ENCODE measurements at regions of chr7 and their contacts with region 1.

Region 1: GRCh38 chr7:137626469-137627067 is 220.2 kb downstream of the DGKI start:
- DNase-seq: peak in 1 of 2 experiments; percentile 85
- H3K4me3 ChIP-seq: no peak overlapping the region
- H3K27ac ChIP-seq: no peak overlapping the region
- H3K4me1 ChIP-seq: no peaks in the 10 kb centered on the region
- H3K27me3 ChIP-seq: no peaks in the 10 kb centered on the region
- CTCF ChIP-seq: peak; percentile 71 to 92 (median 89)
- EP300 ChIP-seq: no peak
- POLR2A ChIP-seq: no peak
- RAD21 ChIP-seq: peak; percentile 80 to 88

Region 2: DNA sequence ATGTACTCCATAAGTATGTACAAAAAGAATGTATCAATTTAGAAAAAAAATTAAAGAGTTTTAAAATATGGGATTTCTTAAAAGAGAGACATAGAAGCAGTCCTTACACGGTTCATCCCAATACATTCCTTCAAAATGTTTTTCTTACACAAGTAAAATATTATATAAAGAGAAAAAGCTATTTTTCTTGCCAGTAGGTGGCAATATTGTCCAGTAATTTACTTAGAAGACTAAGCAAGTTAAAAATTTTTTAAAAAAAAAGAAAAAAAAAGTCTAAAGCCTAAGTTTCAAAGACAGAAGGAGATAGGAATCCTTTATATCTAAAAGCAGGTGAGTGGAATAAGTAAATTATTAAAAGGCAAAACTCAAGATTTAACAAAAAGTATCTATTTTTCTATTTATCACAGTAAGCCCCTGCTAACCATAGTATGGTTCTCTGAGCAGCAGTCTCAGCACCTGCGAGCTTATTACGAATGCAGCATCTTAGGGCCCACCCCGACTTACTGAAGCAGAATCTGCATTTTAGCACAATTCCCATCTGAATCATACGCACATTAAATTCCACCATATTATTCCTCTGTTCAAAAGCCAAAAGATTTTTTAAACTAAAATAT is 20.4 kb before region 1 on chr7:
- CTCF ChIA-PET with region 1: interaction called, 91 read pairs
- POLR2A ChIA-PET with region 1: interaction called, 3 read pairs
- DNase-seq: no peak
- H3K4me3 ChIP-seq: no peak overlapping the region
- H3K27ac ChIP-seq: no peak overlapping the region
- H3K4me1 ChIP-seq: no peaks in the 10 kb centered on the region; a peak in 1 of 7 replicates
- H3K27me3 ChIP-seq: no peaks in the 10 kb centered on the region
- CTCF ChIP-seq: no peak; a peak in 1 of 4 replicates
- EP300 ChIP-seq: no peak
- POLR2A ChIP-seq: no peak
- RAD21 ChIP-seq: peak in 1 of 2 experiments; percentile 31; a peak in 2 of 4 replicates

Region 3: GRCh38 chr7:137613006-137613405 is 13.6 kb before region 1 on chr7:
- CTCF ChIA-PET with region 1: interaction called, 91 read pairs
- POLR2A ChIA-PET with region 1: no interaction called
- DNase-seq: no peak
- H3K4me3 ChIP-seq: no peak overlapping the region
- H3K27ac ChIP-seq: no peak overlapping the region
- H3K4me1 ChIP-seq: peaks cover 0 to 3% (median 1%) of the 10 kb centered on the region in 4 experiments; a peak in 1 of 7 replicates
- H3K27me3 ChIP-seq: no peaks in the 10 kb centered on the region
- CTCF ChIP-seq: no peak
- EP300 ChIP-seq: no peak
- POLR2A ChIP-seq: no peak
- RAD21 ChIP-seq: no peak